ENCODE measurements at regions of chr3 and their contacts with region 1.

Region 1: DNA sequence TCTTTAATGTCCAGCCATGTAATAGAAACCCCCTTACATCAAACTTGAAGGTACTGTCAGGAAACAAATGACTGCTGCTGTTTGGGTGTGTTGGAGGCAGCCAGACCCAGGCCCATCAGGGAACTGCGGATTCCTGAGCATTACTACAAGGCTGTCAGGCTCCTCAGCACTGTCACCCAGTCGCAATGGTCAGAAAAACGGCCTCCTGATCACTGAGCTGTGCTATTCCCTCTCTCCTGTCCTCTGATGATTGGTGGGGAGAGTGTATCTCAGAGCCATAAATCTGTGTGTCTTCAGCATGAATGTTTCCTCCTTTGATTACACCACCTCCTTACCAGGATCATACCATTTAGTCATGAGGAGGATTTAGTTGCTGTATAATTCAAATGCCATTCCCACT is 135.2 kb upstream of the GADL1 start:
- DNase-seq: no peak
- H3K4me3 ChIP-seq: no peak overlapping the region
- CTCF ChIP-seq: no peak

Region 2: GRCh38 chr3:30948426-30948825 is 81.3 kb before region 1 on chr3:
- in situ Hi-C with region 1: loop called (anchors 5 kb)
- DNase-seq: no peak
- H3K4me3 ChIP-seq: no peak overlapping the region
- CTCF ChIP-seq: no peak

Region 3: GRCh38 chr3:31116651-31117050 is 86.9 kb after region 1 on chr3:
- in situ Hi-C with region 1: no loop called
- DNase-seq: no peak
- H3K4me3 ChIP-seq: no peak overlapping the region
- CTCF ChIP-seq: no peak